ENCODE measurements at regions of chr3 and their contacts with region 1.

Region 1: DNA sequence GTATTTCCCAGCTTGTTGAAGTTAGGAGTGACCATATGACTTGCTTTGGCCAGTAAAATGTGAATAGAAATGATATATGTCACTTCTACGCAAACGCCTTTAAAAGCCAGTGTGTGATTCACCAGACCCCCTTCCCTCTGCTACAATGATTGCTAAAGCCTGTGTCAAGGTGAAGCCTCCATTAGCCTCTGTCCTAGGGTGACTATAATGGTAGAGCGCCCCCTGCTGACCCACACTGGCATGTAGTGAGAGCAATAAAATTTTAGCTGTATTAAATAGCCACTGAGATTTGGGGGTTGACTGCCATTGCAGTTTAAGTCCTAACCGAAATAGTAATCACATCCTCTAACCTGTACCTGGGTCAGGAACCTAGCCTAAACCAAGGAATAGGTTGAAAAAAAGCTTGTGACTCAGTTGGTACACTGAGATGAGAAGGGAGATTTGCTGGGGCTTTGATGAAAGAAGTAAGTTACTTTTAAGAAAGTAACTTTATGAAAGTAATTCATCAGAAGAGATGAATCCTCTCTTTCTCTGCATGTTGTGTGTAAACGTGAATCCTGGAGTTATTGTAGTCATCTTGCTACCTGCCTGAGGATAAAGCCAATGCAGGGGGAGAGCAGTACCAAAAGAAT is 52.6 kb downstream of the GTF2E1 start:
- DNase-seq: peak; percentile 85
- H3K4me3 ChIP-seq: no peak overlapping the region
- H3K27ac ChIP-seq: no peak overlapping the region
- H3K4me1 ChIP-seq: peaks cover 34% of the 10 kb centered on the region
- H3K27me3 ChIP-seq: no peaks in the 10 kb centered on the region
- CTCF ChIP-seq: peak; percentile 77 to 79
- POLR2A ChIP-seq: no peak

Region 2: DNA sequence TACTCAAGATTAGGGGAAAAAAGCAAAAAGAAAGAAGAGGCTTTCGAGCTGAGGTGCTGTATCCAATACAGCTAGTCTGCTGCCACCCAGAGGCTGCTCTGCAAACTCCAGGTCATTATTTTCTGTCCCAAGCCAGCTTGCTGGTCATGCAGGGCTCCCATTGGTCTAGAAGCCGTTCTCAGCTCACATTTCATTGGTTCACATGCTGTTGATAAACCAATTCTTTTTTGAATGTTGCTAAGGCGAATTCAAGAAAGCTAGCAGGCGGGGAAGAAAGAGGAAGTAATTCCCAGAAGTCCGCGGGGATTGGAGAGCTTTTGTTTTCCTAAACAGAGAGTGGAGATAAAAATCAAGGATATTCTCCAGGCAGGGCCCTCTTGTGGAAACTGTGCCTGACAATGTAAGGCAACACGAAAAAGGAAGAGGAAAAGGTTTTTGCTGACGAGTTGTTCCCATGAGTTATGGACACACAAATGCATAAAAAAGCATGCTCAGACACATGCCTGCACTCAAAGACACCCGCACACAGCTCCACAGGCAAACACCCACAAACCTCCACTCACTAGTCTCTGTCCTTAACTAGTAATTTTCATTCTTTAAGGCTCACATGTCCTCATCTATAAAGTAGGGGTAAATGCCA is 377.7 kb before region 1 on chr3:
- CTCF ChIA-PET with region 1: interaction called, 22 read pairs
- POLR2A ChIA-PET with region 1: no interaction called
- dilution Hi-C with region 1: no loop called
- intact Hi-C with region 1: loop called (anchors 2 kb)
- DNase-seq: peak; percentile 100
- H3K4me3 ChIP-seq: peak overlapping the region in 2 of 3 experiments; percentile 12 to 24
- H3K27ac ChIP-seq: peak overlapping the region; percentile 75
- H3K4me1 ChIP-seq: peaks cover 29% of the 10 kb centered on the region
- H3K27me3 ChIP-seq: no peaks in the 10 kb centered on the region
- CTCF ChIP-seq: peak; percentile 79 to 96
- POLR2A ChIP-seq: no peak

Region 3: DNA sequence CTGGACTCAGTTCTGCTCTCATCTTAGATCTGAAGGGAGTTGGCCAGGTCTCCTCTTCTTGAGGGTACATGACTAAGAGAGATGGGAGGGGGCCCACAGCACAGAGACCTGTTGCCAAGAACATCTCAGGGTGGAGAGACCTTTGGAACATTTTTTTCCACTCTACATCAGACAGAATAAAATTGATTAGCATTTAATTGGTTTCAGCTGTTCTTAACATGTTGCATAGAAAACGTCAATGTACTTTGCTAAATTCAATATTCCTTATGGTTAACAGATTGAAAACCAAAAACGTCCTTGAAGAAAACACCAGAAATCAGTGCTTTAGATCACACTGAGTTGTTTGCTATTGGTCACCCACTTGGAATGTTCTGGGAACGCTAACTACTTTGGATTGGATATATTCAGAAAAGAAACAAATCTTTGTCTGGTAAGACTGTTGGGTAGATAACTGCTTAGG is 307.9 kb before region 1 on chr3:
- CTCF ChIA-PET with region 1: no interaction called
- POLR2A ChIA-PET with region 1: no interaction called
- dilution Hi-C with region 1: no loop called
- intact Hi-C with region 1: no loop called
- DNase-seq: no peak
- H3K4me3 ChIP-seq: no peak overlapping the region
- H3K27ac ChIP-seq: no peak overlapping the region
- H3K4me1 ChIP-seq: no peaks in the 10 kb centered on the region
- H3K27me3 ChIP-seq: no peaks in the 10 kb centered on the region
- CTCF ChIP-seq: no peak
- POLR2A ChIP-seq: no peak

Region 4: DNA sequence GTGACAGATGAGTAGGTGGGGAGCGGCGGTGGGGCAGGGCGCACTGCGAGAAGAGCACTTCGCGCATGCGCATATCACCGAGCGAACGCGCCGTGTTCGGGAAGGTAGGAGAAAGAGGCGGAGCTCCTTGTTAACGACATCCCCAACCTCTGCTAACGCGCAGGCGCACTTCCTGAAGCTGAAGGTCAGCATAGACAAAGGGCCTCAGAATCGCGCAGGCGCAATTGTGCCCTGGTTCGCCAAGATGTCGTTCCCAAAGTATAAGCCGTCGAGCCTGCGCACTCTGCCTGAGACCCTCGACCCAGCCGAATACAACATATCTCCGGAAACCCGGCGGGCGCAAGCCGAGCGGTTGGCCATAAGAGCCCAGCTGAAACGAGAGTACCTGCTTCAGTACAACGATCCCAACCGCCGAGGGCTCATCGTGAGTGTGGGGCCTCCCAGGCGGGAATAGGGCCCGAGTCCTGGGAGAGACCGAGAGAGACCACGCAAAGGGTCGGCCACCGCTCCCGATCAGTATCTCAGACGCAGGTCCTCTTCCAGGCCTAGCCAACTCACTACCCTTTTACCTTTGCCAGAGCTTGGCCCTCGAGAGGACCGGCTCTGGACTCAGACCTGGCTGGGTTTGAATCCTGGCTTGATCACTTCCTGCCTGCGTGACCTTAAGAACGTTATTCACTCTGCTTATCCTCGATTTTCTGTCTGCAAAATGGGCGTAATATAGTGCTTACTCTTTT is 198.8 kb before region 1 on chr3 and contains the start of gene NDUFB4:
- CTCF ChIA-PET with region 1: interaction called, 39 read pairs
- POLR2A ChIA-PET with region 1: no interaction called
- dilution Hi-C with region 1: no loop called
- intact Hi-C with region 1: loop called (anchors 1 kb)
- DNase-seq: peak; percentile 99
- H3K4me3 ChIP-seq: peak within 1 kb of the TSS; percentile 50 to 88 (median 81)
- H3K27ac ChIP-seq: peak within 1 kb of the TSS; percentile 83
- H3K4me1 ChIP-seq: peaks cover 6% of the 10 kb centered on the region
- H3K27me3 ChIP-seq: no peaks in the 10 kb centered on the region
- CTCF ChIP-seq: no peak
- POLR2A ChIP-seq: peak; percentile 95
- total RNA-seq, gene NDUFB4: 140 TPM in 2 replicates

Region 5: DNA sequence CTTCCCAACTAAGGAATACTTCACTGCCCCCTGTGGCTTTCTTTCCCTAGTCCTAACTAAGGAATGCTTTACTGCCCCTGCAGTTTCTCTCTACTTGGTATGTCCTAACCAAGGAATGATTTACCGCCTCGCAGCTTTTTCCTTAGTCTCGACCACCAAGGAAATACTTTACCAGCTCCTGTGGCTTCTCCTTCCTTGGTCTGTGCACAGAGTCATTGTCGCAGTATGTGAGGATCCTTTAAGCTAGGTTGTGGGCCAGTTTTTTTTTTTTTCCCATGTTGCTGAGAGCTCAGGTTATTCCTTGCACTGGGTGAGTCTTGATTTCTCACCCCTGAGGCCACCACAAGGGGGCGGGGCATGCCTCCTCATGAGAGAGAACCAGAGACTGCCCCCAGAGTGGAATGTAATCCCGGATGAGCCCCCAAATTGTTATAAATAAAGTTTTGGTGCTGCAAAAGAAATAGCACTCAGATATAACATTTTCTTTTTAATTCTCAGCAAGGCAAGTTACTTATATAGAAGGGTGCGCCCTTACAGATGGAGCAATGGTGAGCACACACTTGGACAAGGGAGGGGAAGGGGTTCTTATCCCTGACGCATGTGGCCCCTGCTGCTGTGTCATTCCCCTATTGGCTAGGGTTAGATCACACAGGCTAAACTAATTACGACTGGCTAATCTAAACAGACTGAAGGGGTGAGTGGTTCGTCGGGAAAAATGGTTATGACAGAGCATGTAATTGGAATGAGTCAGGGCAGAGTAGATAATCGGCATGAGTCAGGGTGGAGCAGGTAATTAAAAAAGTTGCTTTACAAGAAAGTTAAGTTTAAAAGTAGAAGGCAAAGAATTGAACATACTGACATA is 172.0 kb before region 1 on chr3:
- CTCF ChIA-PET with region 1: interaction called, 31 read pairs
- POLR2A ChIA-PET with region 1: no interaction called
- dilution Hi-C with region 1: no loop called
- intact Hi-C with region 1: loop called (anchors 1 kb)
- DNase-seq: peak; percentile 51
- H3K4me3 ChIP-seq: no peak overlapping the region
- H3K27ac ChIP-seq: no peak overlapping the region
- H3K4me1 ChIP-seq: peaks cover 8% of the 10 kb centered on the region
- H3K27me3 ChIP-seq: no peaks in the 10 kb centered on the region
- CTCF ChIP-seq: peak; percentile 22 to 28
- POLR2A ChIP-seq: no peak

Region 6: DNA sequence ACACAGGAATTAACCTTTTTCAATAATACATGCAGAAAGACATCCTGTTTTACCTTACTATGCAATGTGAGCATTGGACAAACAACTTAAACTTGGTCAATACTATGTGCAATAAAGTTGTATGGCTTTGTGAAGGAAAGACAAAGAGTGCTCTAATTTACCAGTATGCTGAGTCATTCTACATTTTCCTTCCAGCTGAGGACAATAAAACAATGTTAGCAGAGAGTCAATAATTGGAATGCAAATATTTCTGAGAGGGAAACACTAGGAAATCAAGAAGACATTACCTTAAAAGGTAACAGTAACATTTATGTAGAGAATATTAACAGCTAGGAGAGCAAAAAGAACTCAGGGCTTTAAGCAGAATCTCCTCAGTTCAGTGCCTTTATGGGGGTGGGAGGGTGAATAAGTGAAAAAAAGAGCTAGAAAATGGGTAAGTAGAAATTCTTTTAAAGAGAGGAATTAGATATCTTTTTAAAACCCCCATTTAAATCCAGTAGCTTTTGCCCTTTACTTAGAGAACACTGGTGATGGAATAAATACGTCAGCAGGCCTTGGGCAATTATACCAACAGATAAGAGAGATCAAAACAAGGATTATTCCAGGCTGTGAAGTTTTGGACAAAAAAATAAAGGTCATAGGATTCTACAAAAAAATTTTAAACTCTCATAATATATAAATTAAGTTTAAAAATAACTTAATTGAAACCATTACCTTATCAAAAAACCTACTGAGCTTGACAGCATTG is 101.5 kb before region 1 on chr3:
- CTCF ChIA-PET with region 1: interaction called, 26 read pairs
- POLR2A ChIA-PET with region 1: no interaction called
- dilution Hi-C with region 1: no loop called
- intact Hi-C with region 1: no loop called
- DNase-seq: peak; percentile 79
- H3K4me3 ChIP-seq: no peak overlapping the region
- H3K27ac ChIP-seq: peak overlapping the region; percentile 68
- H3K4me1 ChIP-seq: peaks cover 12% of the 10 kb centered on the region
- H3K27me3 ChIP-seq: no peaks in the 10 kb centered on the region
- CTCF ChIP-seq: no peak
- POLR2A ChIP-seq: no peak

Region 7: GRCh38 chr3:120742198-120742849 is 52.8 kb before region 1 on chr3 and contains the starts of genes GTF2E1 and RABL3:
- CTCF ChIA-PET with region 1: interaction called, 28 read pairs
- POLR2A ChIA-PET with region 1: no interaction called
- dilution Hi-C with region 1: no loop called
- intact Hi-C with region 1: loop called (anchors 1 kb)
- DNase-seq: peak; percentile 100
- H3K4me3 ChIP-seq: peak within 1 kb of the TSS; percentile 67 to 96 (median 81)
- H3K27ac ChIP-seq: peak within 1 kb of the TSS; percentile 93
- H3K4me1 ChIP-seq: peaks cover 29% of the 10 kb centered on the region
- H3K27me3 ChIP-seq: no peaks in the 10 kb centered on the region
- CTCF ChIP-seq: no peak
- POLR2A ChIP-seq: peak; percentile 73
- total RNA-seq, gene GTF2E1: 25.5 and 27.7 TPM in 2 replicates
- total RNA-seq, gene RABL3: 24.9 and 25.9 TPM in 2 replicates